PC-3 (cell line): ENCODE measurements at regions of chr10 and their contacts with region 1.

Region 1: GRCh38 chr10:66844176-66844942 is 81.5 kb upstream of the LRRTM3 start:
- DNase-seq: peak; percentile 96
- ATAC-seq: peak; percentile 97
- H3K4me3 ChIP-seq: no peak overlapping the region
- H3K27ac ChIP-seq: peak overlapping the region; percentile 35
- H3K4me1 ChIP-seq: peaks cover 26% of the 10 kb centered on the region
- H3K27me3 ChIP-seq: no peaks in the 10 kb centered on the region
- CTCF ChIP-seq: peak; percentile 68

Region 2: GRCh38 chr10:66307826-66308225 is 536.5 kb before region 1 on chr10:
- CTCF ChIA-PET with region 1: no interaction called
- POLR2A ChIA-PET with region 1: no interaction called
- intact Hi-C with region 1: loop called (anchors 5 kb)
- DNase-seq: peak; percentile 78
- ATAC-seq: peak; percentile 87
- H3K4me3 ChIP-seq: no peak overlapping the region
- H3K27ac ChIP-seq: no peak overlapping the region
- H3K4me1 ChIP-seq: no peaks in the 10 kb centered on the region
- H3K27me3 ChIP-seq: no peaks in the 10 kb centered on the region
- CTCF ChIP-seq: peak; percentile 91

Region 3: GRCh38 chr10:66799474-66799873 is 44.9 kb before region 1 on chr10:
- CTCF ChIA-PET with region 1: no interaction called
- POLR2A ChIA-PET with region 1: no interaction called
- intact Hi-C with region 1: loop called (anchors 5 kb)
- DNase-seq: peak; percentile 66
- ATAC-seq: peak; percentile 75
- H3K4me3 ChIP-seq: peak overlapping the region; percentile 64
- H3K27ac ChIP-seq: no peak overlapping the region
- H3K4me1 ChIP-seq: peaks cover 20% of the 10 kb centered on the region
- H3K27me3 ChIP-seq: no peaks in the 10 kb centered on the region
- CTCF ChIP-seq: no peak

Region 4: GRCh38 chr10:66862687-66863258 is 18.4 kb after region 1 on chr10:
- CTCF ChIA-PET with region 1: no interaction called
- POLR2A ChIA-PET with region 1: no interaction called
- intact Hi-C with region 1: loop called (anchors 1 kb)
- DNase-seq: no peak
- ATAC-seq: no peak
- H3K4me3 ChIP-seq: no peak overlapping the region
- H3K27ac ChIP-seq: no peak overlapping the region
- H3K4me1 ChIP-seq: peaks cover 13% of the 10 kb centered on the region
- H3K27me3 ChIP-seq: no peaks in the 10 kb centered on the region
- CTCF ChIP-seq: no peak

Region 5: DNA sequence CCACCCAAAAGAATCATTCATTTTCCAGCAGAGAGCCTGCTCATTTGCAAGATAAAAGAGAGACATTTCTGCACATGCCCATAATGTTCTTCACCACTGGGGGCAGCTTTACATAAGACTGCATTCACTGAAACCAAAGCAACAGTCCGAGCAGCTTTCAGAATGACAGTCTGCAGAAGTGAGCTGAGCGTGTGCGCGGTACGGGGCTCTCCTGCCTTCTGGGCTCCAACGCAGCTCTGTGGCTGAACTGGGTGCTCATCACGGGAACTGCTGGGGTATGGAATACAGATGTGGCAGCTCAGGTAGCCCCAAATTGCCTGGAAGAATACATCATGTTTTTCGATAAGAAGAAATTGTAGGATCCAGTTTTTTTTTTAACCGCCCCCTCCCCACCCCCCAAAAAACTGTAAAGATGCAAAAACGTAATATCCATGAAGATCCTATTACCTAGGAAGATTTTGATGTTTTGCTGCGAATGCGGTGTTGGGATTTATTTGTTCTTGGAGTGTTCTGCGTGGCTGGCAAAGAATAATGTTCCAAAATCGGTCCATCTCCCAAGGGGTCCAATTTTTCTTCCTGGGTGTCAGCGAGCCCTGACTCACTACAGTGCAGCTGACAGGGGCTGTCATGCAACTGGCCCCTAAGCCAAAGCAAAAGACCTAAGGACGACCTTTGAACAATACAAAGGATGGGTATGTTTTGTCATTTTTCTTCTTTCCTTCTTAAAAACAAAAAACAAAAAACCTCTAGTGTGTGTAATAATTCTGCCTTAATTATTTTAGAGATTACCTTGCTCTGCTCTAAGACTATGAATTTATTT is 81.7 kb after region 1 on chr10 and contains the start of gene LRRTM3:
- CTCF ChIA-PET with region 1: no interaction called
- POLR2A ChIA-PET with region 1: no interaction called
- intact Hi-C with region 1: loop called (anchors 5 kb)
- DNase-seq: peak; percentile 99
- ATAC-seq: peak; percentile 99
- H3K4me3 ChIP-seq: peak within 1 kb of the TSS; percentile 42
- H3K27ac ChIP-seq: no peak within 1 kb of the TSS
- H3K4me1 ChIP-seq: peaks cover 18% of the 10 kb centered on the region
- H3K27me3 ChIP-seq: peaks cover 6% of the 10 kb centered on the region; the same call in 1 of the 2 replicates
- CTCF ChIP-seq: peak; percentile 99
- total RNA-seq, gene LRRTM3: 0.12 and 0.15 TPM in 2 replicates